Endothelial cell of umbilical vein (primary cell): ENCODE measurements at regions of chr6 and their contacts with region 1.

Region 1: DNA sequence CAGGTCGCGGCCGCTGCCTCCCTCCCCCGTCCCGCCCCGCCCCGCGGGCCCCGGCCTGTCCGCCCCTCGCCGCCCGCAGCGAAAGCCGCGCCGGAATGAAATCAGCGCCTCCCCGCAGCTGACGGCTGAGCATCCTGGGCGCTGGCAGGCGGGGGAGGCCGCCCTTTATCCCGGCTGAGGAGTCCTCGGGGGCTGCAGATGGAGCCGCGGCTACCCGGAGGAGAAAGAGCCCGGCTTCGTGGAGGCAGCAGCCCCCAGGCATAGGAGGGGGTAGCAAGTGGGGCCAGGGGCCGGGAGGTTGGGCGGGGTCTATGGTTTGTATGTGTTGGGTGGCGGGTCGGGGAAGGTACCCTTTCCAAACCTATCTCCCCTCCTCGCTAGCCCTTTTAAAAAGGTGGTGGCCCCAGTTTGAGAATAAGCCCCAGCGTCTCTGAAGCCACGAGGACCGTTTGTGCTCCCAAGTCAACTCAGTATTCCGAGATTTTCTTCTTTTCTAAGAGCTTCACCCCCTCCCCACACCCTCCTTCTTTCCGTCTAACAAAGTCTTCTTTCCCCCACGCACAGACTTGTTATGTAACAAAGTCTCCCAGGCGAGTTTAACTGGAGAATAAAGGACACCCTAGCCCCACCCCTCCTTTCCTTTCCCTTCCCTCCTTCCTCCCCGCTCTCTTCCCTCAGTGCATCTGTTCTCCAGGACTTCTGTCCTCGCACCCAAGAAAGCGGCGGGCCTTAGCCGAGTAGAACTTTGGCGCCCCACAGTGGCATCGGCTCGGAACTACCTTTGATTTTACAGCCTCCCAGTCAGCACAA is 11.0 kb downstream of the POU3F2 start:
- DNase-seq: peak; percentile 80
- H3K4me3 ChIP-seq: no peak overlapping the region
- H3K27ac ChIP-seq: no peak overlapping the region
- H3K4me1 ChIP-seq: peaks cover 2% of the 10 kb centered on the region
- H3K27me3 ChIP-seq: peaks cover 85 to 98% of the 10 kb centered on the region in 2 experiments
- CTCF ChIP-seq: peak; percentile 81 to 87
- POLR2A ChIP-seq: no peak

Region 2: GRCh38 chr6:97068211-97068610 is 1777.2 kb before region 1 on chr6:
- CTCF ChIA-PET with region 1: interaction called, 5 read pairs
- POLR2A ChIA-PET with region 1: no interaction called
- dilution Hi-C with region 1: no loop called
- intact Hi-C with region 1: loop called (anchors 2 kb)
- DNase-seq: peak; percentile 47
- H3K4me3 ChIP-seq: no peak overlapping the region
- H3K27ac ChIP-seq: no peak overlapping the region
- H3K4me1 ChIP-seq: no peaks in the 10 kb centered on the region
- H3K27me3 ChIP-seq: peaks cover 8 to 25% of the 10 kb centered on the region in 2 experiments
- CTCF ChIP-seq: peak; percentile 14 to 19
- POLR2A ChIP-seq: no peak

Region 3: GRCh38 chr6:97394160-97394748 is 1451.2 kb before region 1 on chr6:
- CTCF ChIA-PET with region 1: no interaction called
- POLR2A ChIA-PET with region 1: no interaction called
- dilution Hi-C with region 1: no loop called
- intact Hi-C with region 1: loop called (anchors 2 kb)
- DNase-seq: peak; percentile 75
- H3K4me3 ChIP-seq: no peak overlapping the region
- H3K27ac ChIP-seq: no peak overlapping the region
- H3K4me1 ChIP-seq: no peaks in the 10 kb centered on the region
- H3K27me3 ChIP-seq: peaks cover 4 to 5% of the 10 kb centered on the region in 2 experiments
- CTCF ChIP-seq: peak; percentile 71 to 73
- POLR2A ChIP-seq: no peak

Region 4: GRCh38 chr6:97497713-97498331 is 1347.6 kb before region 1 on chr6:
- CTCF ChIA-PET with region 1: interaction called, 13 read pairs
- POLR2A ChIA-PET with region 1: no interaction called
- dilution Hi-C with region 1: no loop called
- intact Hi-C with region 1: loop called (anchors 1 kb)
- DNase-seq: peak; percentile 63
- H3K4me3 ChIP-seq: no peak overlapping the region
- H3K27ac ChIP-seq: no peak overlapping the region
- H3K4me1 ChIP-seq: no peaks in the 10 kb centered on the region
- H3K27me3 ChIP-seq: no peaks in the 10 kb centered on the region
- CTCF ChIP-seq: peak; percentile 72 to 86
- POLR2A ChIP-seq: no peak

Region 5: DNA sequence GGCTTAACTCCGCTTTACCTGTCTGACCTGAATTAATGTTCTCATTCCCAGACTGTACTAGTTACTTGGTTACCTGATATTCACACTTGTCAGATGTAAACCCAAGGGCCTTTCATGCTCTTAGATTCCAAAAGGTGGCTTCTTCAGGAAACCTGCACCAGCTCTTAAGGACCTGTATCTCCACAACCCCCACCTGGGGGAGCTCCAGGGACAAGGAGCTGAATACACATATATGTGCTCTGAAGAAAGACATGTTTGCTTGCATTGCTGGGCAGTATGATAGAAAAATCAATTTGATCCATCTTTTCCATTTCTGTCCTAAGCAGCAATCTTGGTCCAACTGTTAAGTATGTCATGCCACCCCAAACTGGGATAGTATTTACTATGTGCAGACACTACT is 75.9 kb before region 1 on chr6:
- CTCF ChIA-PET with region 1: no interaction called
- POLR2A ChIA-PET with region 1: no interaction called
- dilution Hi-C with region 1: no loop called
- intact Hi-C with region 1: loop called (anchors 1 kb)
- DNase-seq: no peak
- H3K4me3 ChIP-seq: no peak overlapping the region
- H3K27ac ChIP-seq: no peak overlapping the region
- H3K4me1 ChIP-seq: no peaks in the 10 kb centered on the region
- H3K27me3 ChIP-seq: no peaks in the 10 kb centered on the region
- CTCF ChIP-seq: no peak
- POLR2A ChIP-seq: no peak

Region 6: GRCh38 chr6:98957446-98957845 is 112.0 kb after region 1 on chr6:
- CTCF ChIA-PET with region 1: no interaction called
- POLR2A ChIA-PET with region 1: no interaction called
- dilution Hi-C with region 1: no loop called
- intact Hi-C with region 1: loop called (anchors 5 kb)
- DNase-seq: peak; percentile 95
- H3K4me3 ChIP-seq: no peak overlapping the region
- H3K27ac ChIP-seq: no peak overlapping the region
- H3K4me1 ChIP-seq: peaks cover 22% of the 10 kb centered on the region
- H3K27me3 ChIP-seq: peaks cover 16 to 33% of the 10 kb centered on the region in 2 experiments
- CTCF ChIP-seq: no peak
- POLR2A ChIP-seq: peak; percentile 48

Region 7: DNA sequence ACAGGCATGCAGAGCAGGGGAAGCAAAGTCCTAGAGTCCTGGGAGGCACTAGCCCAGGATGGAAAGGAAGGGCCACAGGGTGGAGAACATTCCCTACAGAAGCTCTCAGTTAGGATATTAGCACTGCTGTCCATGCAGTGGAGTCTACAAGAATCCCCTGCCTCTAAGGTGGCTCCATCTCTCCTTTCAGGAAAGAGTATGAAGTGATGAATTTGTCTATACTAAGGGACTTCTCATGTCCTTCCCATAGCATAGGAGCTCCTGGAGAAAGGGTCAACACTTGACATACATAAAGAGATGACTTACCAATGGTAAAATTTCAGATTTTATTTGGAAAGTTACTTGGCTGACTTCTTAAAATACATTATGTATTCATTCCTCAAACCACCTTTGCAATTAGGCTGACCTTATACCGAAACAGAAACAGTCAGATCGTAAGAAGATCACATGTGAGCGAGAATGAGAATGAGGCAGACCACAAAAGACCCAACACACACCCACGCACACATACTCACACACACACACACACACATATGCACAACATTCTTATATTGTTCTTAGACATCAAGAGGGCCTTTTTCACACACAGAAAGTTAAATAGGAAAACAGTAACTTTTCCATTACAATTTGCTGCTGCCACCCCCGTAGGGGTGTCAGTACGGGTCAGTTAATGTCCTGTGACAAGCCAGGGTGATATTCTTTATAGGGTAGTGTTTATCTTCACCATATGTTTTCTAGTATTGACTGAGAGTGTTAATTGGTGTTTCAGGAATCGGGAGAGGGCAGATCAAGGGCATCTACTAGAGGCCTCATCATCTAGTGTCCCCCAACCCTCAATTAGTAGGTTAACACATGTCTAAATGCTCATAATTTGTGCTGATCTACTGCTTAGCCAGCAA is 344.7 kb after region 1 on chr6:
- CTCF ChIA-PET with region 1: no interaction called
- POLR2A ChIA-PET with region 1: no interaction called
- dilution Hi-C with region 1: no loop called
- intact Hi-C with region 1: no loop called
- DNase-seq: no peak
- H3K4me3 ChIP-seq: no peak overlapping the region
- H3K27ac ChIP-seq: no peak overlapping the region
- H3K4me1 ChIP-seq: no peaks in the 10 kb centered on the region
- H3K27me3 ChIP-seq: no peaks in the 10 kb centered on the region
- CTCF ChIP-seq: no peak
- POLR2A ChIP-seq: no peak

Region 8: DNA sequence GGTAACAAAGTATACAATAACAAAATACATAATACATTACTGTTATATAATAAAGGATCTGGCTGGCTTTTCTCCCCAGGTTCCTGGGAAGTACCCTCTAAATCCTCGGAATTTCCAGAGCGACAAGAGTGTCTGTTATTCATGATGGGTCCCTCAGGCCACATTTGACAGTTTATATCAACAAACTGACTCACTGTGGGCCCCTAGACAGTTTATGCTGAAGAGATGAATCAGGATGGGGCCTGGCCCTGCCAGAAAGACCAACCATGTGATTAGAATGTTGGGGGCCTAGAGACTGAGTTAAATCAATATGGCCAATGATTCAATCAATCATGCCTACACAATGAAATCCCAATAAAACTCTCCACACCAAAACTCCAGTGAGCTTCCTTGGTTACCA is 656.3 kb after region 1 on chr6:
- CTCF ChIA-PET with region 1: no interaction called
- POLR2A ChIA-PET with region 1: no interaction called
- dilution Hi-C with region 1: no loop called
- intact Hi-C with region 1: no loop called
- DNase-seq: no peak
- H3K4me3 ChIP-seq: no peak overlapping the region
- H3K27ac ChIP-seq: no peak overlapping the region
- H3K4me1 ChIP-seq: no peaks in the 10 kb centered on the region
- H3K27me3 ChIP-seq: no peaks in the 10 kb centered on the region
- CTCF ChIP-seq: no peak
- POLR2A ChIP-seq: no peak